Activated T-helper 1 cell treated with anti-CD3 and anti-CD28 coated beads, Interleukin-12 subunit alpha, Interleukin-12 subunit beta, Interleukin-2, Interleukin-4 antibody, amounts not matched to agents 30 ng/mL and 10 ng/mL and 1 ng/mL, durations not matched to agents 14 hours and 24 hours and 36 hours (primary cell): ENCODE measurements at regions of chr17 and their contacts with region 1.

Region 1: GRCh38 chr17:50865984-50866774 is at the start of gene TOB1:
- DNase-seq: peak; percentile 94
- H3K4me3 Mint-ChIP-seq: peak within 1 kb of the TSS; percentile 100
- H3K27ac Mint-ChIP-seq: peak within 1 kb of the TSS; percentile 99
- H3K4me1 Mint-ChIP-seq: peaks cover 60% of the 10 kb centered on the region
- H3K27me3 Mint-ChIP-seq: peaks cover 2% of the 10 kb centered on the region
- total RNA-seq, gene TOB1: 29.6 and 35.5 TPM in 2 replicates

Region 2: DNA sequence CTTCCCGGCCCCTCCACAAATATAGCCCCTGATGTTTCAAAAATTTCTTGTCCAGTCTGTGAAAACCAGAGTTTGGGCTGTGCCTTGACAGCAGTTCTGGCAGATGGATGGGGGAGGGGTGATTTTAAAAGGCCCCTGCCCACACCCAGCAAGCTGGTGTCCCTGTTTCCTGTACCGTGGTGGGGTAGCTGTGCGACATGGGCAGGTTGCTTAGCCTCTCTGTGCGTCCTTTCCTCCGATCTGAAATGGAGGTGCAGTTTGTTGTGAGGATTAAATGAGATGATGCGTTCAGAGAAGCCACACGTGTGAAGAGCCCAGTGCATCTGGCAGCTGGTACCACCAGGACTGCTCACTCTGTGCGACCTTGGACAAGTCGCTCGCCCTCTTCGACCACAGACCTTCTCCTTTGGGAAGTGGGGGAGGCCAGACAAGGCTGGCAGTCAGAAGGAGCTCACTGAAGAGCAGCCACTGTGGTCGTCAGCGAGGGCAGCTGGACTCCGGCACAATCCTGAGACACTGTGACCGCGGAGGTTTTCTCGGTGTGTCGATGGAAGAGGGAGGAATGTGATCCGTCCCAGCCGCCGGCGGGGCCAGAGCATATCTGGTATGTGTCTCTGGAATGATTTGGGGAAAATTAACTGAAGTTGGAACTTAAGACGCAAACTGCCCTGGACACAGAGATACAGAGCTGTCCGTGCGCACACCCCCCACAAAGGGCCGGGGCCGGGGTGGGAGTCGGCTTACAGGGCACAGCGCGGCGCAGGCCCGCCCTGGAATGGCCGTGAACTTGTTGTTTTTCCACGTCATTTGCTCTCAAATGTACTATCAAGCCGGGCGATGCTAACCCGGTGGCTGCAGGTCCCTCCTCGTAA is 31.5 kb before region 1 on chr17:
- intact Hi-C with region 1: no loop called
- DNase-seq: no peak
- H3K4me3 Mint-ChIP-seq: no peak overlapping the region
- H3K27ac Mint-ChIP-seq: no peak overlapping the region
- H3K4me1 Mint-ChIP-seq: no peaks in the 10 kb centered on the region
- H3K27me3 Mint-ChIP-seq: peaks cover 7% of the 10 kb centered on the region

Region 3: GRCh38 chr17:50909765-50910605 is 43.8 kb after region 1 on chr17:
- intact Hi-C with region 1: loop called (anchors 2 kb)
- DNase-seq: peak; percentile 30
- H3K4me3 Mint-ChIP-seq: peak overlapping the region; percentile 26
- H3K27ac Mint-ChIP-seq: peak overlapping the region; percentile 23
- H3K4me1 Mint-ChIP-seq: peaks cover 43% of the 10 kb centered on the region
- H3K27me3 Mint-ChIP-seq: no peaks in the 10 kb centered on the region

Region 4: GRCh38 chr17:50931144-50931908 is 65.1 kb after region 1 on chr17:
- intact Hi-C with region 1: loop called (anchors 2 kb)
- DNase-seq: peak; percentile 17
- H3K4me3 Mint-ChIP-seq: peak overlapping the region; percentile 63
- H3K27ac Mint-ChIP-seq: peak overlapping the region; percentile 43
- H3K4me1 Mint-ChIP-seq: peaks cover 17% of the 10 kb centered on the region
- H3K27me3 Mint-ChIP-seq: peaks cover 25% of the 10 kb centered on the region

Region 5: DNA sequence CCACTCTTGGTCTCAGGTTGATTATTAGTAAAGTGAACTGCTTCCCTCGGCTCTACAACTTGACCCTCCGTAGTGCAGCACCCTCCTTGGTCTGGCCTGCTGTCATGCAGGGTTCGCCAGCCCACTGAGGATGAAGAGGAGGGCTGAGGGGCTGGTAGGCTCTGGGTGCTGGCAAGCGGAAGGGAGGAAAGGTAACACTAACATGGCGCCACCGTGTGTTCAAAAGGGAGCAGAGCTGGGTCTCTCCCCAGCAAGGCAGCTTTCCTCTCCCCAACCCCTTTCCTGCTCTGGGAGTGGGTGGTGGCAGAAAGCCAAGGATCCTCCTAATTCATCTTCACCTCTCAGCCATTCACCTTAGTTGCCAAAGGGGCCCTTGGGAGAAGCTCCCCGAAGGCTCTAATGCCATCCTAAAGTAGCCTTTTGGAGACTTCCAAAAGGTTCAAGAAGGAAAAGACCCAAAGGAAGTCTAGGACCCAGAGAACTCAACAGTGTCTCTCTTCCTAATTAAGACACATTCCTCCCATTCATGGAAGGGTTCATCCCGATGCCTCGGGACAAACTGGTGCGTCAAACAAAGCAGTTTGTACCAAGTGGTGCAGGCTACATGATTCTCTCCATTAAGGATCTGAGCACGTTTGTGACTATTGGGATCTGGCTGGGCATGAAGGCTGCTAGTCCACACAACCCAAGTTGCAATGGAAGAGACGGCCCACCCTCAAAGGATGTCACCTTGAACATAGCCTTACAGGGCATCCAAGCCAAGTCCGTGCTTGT is 90.8 kb after region 1 on chr17:
- intact Hi-C with region 1: loop called (anchors 1 kb)
- DNase-seq: peak; percentile 51
- H3K4me3 Mint-ChIP-seq: no peak overlapping the region
- H3K27ac Mint-ChIP-seq: peak overlapping the region; percentile 48
- H3K4me1 Mint-ChIP-seq: peaks cover 5% of the 10 kb centered on the region
- H3K27me3 Mint-ChIP-seq: no peaks in the 10 kb centered on the region

Region 6: GRCh38 chr17:51153210-51154072 is 287.3 kb after region 1 on chr17 and contains the start of gene NME1:
- intact Hi-C with region 1: loop called (anchors 1 kb)
- DNase-seq: peak; percentile 96
- H3K4me3 Mint-ChIP-seq: no peak within 1 kb of the TSS
- H3K27ac Mint-ChIP-seq: no peak within 1 kb of the TSS
- H3K4me1 Mint-ChIP-seq: peaks cover 21% of the 10 kb centered on the region
- H3K27me3 Mint-ChIP-seq: no peaks in the 10 kb centered on the region
- total RNA-seq, gene NME1: 413 and 424 TPM in 2 replicates